Right cardiac atrium (tissue), 5 donors: ENCODE measurements at regions of chr7 and their contacts with region 1.

Region 1: DNA sequence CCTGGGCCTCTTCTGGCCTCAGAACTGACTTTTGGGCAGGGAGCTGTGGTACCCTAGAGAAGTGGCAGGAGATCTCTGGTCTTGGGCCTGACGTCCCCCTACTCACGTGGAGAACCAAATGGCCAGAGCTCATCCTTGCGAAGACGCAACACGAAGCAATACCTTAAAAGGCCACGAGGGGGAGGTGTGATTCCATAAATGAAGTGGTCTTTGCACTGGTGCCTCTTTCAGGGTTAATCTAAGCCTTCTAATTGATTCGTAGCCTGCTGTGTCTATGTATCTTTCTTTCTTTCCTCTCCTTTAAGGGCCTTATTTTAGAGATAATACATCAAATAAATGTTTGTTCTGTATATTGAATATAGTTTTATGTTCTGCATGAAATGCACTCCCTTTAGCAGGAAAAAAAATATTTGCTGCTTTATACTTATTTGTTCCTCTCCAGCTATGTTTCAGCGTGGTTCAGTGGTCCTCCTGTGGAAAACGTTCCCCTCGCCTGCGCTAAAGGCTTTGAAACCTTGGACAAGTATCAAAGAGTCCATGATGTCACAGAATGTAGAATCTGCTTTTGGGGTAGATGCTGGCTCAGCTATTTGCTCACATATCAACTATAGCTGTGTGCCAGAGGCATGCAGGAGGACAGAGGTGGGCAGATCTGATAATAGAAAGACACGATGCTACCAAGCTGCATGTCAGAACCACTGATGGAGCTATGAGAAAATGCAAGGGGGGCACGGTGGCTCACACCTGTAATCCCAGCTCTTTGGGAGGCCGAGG is 41.0 kb downstream of the STRA8 start:
- DNase-seq: peak in 2 of 3 donors; percentile 38 to 82
- ATAC-seq: peak; percentile 63 to 69
- H3K4me3 ChIP-seq: no peak overlapping the region
- H3K27ac ChIP-seq: no peak overlapping the region
- H3K4me1 ChIP-seq: no peaks in the 10 kb centered on the region
- H3K27me3 ChIP-seq: no peaks in the 10 kb centered on the region

Region 2: DNA sequence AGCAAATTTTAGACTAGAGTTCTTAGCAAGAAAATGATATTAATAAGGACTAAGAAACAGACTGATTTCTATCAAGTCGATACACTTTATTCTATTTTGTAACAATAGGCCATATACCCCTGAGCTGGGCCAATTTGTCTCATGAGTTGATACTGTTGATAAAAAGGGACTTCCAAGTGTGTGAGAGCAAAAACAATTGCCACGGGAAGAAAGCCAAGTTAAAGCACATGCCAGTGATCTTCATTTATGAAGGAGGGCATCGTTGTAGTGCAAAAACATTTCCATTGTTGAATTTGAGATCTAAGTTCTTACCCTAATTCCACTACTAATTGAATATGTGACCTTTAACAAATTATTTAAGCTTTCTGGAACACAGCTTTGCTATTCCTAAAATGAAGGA is 115.3 kb after region 1 on chr7:
- intact Hi-C with region 1: no loop called
- DNase-seq: no peak
- ATAC-seq: no peak
- H3K4me3 ChIP-seq: no peak overlapping the region
- H3K27ac ChIP-seq: no peak overlapping the region
- H3K4me1 ChIP-seq: no peaks in the 10 kb centered on the region
- H3K27me3 ChIP-seq: no peaks in the 10 kb centered on the region

Region 3: GRCh38 chr7:135620980-135621850 is 346.5 kb after region 1 on chr7:
- intact Hi-C with region 1: no loop called
- DNase-seq: peak in 1 of 3 donors; percentile 20
- ATAC-seq: peak; percentile 51 to 57
- H3K4me3 ChIP-seq: no peak overlapping the region
- H3K27ac ChIP-seq: no peak overlapping the region
- H3K4me1 ChIP-seq: no peaks in the 10 kb centered on the region
- H3K27me3 ChIP-seq: no peaks in the 10 kb centered on the region

Region 4: DNA sequence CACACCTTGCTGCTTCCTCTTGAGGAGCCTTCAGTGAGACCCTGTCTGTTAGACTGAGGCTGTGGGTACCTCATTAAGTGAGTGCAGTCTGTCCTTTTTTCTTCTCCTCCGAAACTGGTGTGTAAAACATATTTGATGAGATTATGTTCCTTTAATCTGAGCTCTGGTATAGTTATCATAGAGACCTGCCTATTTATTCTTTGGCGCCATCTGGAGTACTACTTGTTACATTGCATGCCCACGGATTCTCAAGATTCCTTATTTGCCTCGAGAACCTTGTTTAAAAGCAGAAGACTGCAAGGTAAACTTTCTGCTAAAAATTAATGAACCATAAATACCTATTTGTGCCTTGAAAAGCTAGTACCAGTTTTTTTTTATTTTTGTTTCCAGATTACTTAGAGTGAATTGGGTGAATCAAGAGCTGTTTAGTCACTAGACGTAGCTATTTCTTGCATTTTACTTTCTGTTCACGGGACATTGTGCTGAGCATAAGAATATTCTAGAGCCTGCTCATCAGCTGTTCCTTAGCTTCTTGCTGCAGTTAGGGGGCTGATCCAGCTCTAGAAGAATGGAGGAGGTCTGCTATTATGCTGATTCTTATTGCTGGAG is 370.7 kb after region 1 on chr7:
- intact Hi-C with region 1: loop called in 1 of 4 experiments (anchors 10 kb)
- DNase-seq: no peak
- ATAC-seq: peak; percentile 26 to 73
- H3K4me3 ChIP-seq: no peak overlapping the region
- H3K27ac ChIP-seq: no peak overlapping the region
- H3K4me1 ChIP-seq: no peaks in the 10 kb centered on the region
- H3K27me3 ChIP-seq: no peaks in the 10 kb centered on the region